Posterior vena cava (tissue), 2 donors: ENCODE measurements at regions of chr7 and their contacts with region 1.

Region 1: DNA sequence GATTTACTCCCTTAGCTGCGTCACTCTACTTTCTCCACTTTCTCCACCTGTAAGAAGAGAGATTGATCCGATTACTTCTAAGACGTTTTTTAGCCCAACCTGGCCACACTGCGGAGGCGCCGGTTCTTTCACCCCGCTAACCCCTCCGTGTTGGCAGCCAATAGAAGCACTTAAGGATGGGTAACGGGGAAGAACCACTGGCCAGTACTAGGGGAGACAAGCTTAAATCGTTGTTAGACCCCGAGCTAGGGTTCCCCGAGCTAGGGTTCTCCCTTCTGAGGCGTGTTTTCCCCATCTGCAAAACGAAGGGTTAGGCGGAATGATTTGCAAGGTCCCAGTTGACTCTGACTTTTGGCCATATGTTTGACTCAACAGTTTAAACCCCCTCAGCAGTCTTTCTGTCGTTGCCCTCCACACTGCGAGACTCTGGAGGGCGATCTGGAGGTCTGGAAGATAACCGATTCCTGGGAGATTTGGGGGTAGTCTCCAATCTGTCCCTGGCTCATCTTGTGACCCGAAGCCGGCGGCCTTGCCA is 644 bp downstream of the UMAD1 start:
- DNase-seq: no peak

Region 2: GRCh38 chr7:7595451-7595850 is 45.7 kb before region 1 on chr7:
- intact Hi-C with region 1: no loop called
- DNase-seq: no peak

Region 3: GRCh38 chr7:7672545-7673239 is 31.5 kb after region 1 on chr7:
- intact Hi-C with region 1: loop called in 1 of 2 experiments (anchors 1 kb)
- DNase-seq: no peak